ENCODE measurements at regions of chr6 and their contacts with region 1.

Region 1: DNA sequence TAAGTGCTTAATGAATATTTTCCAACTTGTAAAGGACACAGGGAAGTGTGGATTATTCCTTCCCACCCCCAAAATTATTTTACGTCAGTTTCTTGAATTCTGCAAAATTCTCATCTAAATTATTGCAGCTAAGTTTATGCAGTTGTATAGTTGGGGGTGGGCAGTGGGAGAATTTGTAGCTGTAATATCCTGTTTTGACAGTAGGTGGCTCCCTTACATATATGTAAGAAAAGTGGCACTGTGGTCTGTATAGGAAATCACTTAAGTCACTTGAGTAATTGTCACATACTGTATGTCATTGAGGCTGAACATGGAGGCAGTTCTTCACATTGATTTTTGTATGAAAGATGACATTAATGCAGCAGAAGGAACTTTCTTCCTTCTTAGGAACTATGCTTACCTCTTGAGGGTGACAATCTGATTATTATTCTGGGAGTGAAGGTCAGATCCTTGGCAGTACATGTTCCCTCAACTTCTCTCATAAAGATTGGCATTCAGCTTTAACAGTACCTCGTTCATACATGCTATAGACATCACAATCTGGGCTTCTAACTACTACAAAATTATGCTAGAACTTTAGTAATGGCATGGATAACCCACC is 14.7 kb upstream of the CFAP206 start:
- DNase-seq: peak; percentile 64
- ATAC-seq: peak; percentile 81
- H3K4me3 ChIP-seq: no peak overlapping the region
- H3K27ac ChIP-seq: no peak overlapping the region
- H3K4me1 ChIP-seq: no peaks in the 10 kb centered on the region
- H3K27me3 ChIP-seq: no peaks in the 10 kb centered on the region
- CTCF ChIP-seq: peak; percentile 69

Region 2: DNA sequence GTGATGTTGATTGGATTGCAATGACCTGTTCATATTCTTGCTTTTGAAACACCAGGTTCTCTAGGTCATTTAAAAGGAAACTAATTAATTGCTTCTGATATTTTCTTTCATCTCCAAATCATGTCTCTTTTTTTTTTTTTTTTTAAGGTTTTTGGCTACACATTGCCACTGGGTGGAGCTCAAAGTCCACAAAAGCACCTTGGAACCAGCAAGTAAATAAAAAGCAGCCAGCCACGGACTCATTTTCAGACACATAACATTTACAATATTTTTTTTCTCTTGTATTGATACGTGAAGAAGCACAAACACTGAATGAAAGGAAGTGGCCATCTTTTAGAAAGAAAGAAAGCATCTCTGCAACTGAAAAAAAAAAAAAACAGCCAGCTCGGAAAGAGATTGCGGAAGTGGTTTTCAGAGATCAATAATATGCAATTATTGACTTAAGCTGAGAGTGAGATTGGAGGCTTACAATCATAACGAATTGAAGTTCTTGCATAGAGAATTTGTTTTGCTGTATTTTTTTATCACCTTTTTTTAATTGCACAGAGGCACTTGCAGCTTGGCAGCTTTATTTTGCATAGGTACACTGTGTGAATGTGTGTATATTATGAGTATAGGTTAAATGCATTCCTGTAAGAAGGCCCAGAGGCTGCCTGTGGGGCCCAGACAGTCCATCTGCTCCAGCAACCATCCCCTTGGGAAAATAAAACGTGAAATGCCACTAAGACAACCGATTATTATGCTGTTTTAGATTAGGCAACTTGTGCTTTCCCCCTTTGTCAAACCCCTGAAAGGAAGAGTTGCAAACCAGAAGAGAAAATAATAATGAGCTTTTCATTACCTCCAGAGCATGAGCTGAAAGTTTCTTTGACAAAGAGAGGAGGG is 326.4 kb before region 1 on chr6:
- CTCF ChIA-PET with region 1: interaction called, 3 read pairs
- POLR2A ChIA-PET with region 1: no interaction called
- intact Hi-C with region 1: loop called (anchors 2 kb)
- DNase-seq: peak; percentile 56
- ATAC-seq: no peak; the same call in 1 of the 2 replicates
- H3K4me3 ChIP-seq: peak overlapping the region; percentile 52; the same call in 1 of the 2 replicates
- H3K27ac ChIP-seq: no peak overlapping the region
- H3K4me1 ChIP-seq: no peaks in the 10 kb centered on the region
- H3K27me3 ChIP-seq: 0 out of 2 replicates have a peak, but pooled peaks cover 5% of the 10 kb centered on the region
- CTCF ChIP-seq: peak; percentile 78

Region 3: DNA sequence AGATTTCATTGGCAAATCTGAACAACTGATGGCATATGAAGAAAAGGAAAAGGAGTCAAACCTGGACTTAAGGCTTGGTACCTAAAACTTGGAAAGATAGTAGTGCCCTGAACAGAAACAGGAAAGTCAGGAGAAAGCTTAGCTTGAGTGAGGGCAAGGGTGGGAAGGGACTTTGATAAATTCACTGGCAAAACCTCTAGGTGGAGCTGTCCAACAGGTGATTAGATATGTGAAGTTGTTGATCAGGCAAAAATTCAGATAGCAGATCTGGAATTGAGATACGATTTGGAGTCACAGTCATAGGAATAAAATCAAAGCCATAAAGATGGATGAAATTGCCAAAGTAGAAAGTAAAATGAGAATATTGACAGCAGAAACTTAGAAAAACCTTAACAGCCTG is 253.9 kb before region 1 on chr6:
- CTCF ChIA-PET with region 1: no interaction called
- POLR2A ChIA-PET with region 1: no interaction called
- intact Hi-C with region 1: loop called (anchors 2 kb)
- DNase-seq: peak; percentile 66
- ATAC-seq: peak; percentile 72
- H3K4me3 ChIP-seq: no peak overlapping the region
- H3K27ac ChIP-seq: no peak overlapping the region
- H3K4me1 ChIP-seq: no peaks in the 10 kb centered on the region
- H3K27me3 ChIP-seq: peaks cover 12% of the 10 kb centered on the region; the same call in 1 of the 2 replicates
- CTCF ChIP-seq: peak; percentile 75

Region 4: DNA sequence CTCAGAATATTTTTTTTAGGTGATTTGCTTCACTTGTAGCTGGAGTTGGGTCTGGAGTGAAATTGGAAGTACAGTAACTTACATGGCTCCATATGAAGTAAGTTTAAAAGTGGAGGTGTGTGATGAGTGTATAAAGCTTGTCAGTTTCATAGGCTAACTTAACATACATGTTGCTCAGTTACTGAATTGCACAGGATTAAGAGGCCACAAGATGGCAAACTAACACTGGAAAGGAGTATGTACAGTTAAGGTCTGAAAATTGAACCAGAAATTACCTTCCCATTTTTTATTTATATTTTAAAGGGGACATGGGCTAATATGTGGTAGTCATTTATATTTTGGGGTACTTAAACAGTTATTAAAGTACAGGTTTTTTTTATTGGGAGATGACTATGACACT is 116.0 kb before region 1 on chr6:
- CTCF ChIA-PET with region 1: no interaction called
- POLR2A ChIA-PET with region 1: no interaction called
- intact Hi-C with region 1: loop called (anchors 1 kb)
- DNase-seq: peak; percentile 57
- ATAC-seq: peak; percentile 71
- H3K4me3 ChIP-seq: no peak overlapping the region
- H3K27ac ChIP-seq: no peak overlapping the region
- H3K4me1 ChIP-seq: peaks cover 10% of the 10 kb centered on the region; the same call in 1 of the 2 replicates
- H3K27me3 ChIP-seq: no peaks in the 10 kb centered on the region
- CTCF ChIP-seq: peak; percentile 62; the same call in 1 of the 2 replicates

Region 5: DNA sequence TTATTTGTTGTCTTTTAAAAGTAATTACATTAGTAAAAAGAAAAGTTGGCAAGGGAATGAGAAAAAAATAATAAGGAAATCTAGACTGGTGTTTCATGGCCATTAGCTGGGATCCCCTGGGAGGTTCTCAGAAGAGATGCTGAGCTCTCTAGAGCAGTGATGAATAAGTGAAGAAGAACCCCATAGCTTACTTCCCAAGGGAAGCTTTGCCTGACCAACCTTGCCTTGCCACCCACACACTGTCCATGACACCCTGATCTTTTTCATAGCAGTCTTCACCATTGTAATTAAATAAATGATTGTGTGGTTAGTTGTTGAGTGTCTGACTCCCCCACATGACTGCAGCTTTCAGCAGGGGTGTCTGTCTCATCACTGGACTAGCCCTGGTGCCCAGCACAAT is 42.6 kb before region 1 on chr6:
- CTCF ChIA-PET with region 1: no interaction called
- POLR2A ChIA-PET with region 1: no interaction called
- intact Hi-C with region 1: no loop called
- DNase-seq: no peak
- ATAC-seq: no peak
- H3K4me3 ChIP-seq: no peak overlapping the region
- H3K27ac ChIP-seq: no peak overlapping the region
- H3K4me1 ChIP-seq: no peaks in the 10 kb centered on the region
- H3K27me3 ChIP-seq: no peaks in the 10 kb centered on the region
- CTCF ChIP-seq: no peak

Region 6: DNA sequence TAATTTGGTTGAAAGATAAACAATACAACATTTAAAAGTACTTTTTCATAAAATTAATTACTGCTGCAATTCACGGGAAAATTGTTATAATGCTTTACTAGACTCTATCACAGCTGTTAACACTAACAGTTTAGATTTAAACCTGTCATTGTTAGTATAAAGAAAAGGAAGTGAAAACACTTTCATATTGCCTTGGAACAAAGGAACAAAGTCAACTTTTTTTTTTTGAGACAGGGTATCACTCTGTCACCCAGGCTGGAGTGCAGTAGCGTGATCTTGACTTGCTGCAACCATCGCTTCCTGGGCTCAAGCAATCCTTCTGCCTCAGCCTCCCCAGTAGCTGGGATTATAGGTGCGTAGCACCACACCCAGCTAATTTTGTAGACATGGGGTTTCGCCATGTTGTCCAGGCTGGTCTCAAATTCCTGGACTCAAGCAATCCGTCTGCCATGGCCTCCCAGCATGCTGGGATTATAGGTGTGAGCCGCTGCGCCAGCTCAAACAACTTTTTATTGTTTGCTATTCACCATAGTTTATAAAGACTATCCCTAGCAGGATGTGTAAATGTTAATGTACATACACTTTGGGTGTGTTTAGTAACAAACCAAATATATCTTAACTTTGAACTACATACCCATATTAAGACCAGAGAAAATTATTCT is 101.8 kb after region 1 on chr6:
- CTCF ChIA-PET with region 1: no interaction called
- POLR2A ChIA-PET with region 1: no interaction called
- intact Hi-C with region 1: loop called (anchors 5 kb)
- DNase-seq: no peak
- ATAC-seq: peak; percentile 89
- H3K4me3 ChIP-seq: no peak overlapping the region
- H3K27ac ChIP-seq: no peak overlapping the region
- H3K4me1 ChIP-seq: no peaks in the 10 kb centered on the region
- H3K27me3 ChIP-seq: no peaks in the 10 kb centered on the region
- CTCF ChIP-seq: no peak

Region 7: GRCh38 chr6:87504441-87504840 is 111.3 kb after region 1 on chr6:
- CTCF ChIA-PET with region 1: interaction called, 3 read pairs
- POLR2A ChIA-PET with region 1: interaction called, 10 read pairs
- intact Hi-C with region 1: loop called (anchors 5 kb)
- DNase-seq: no peak
- ATAC-seq: no peak
- H3K4me3 ChIP-seq: no peak overlapping the region
- H3K27ac ChIP-seq: no peak overlapping the region
- H3K4me1 ChIP-seq: no peaks in the 10 kb centered on the region
- H3K27me3 ChIP-seq: no peaks in the 10 kb centered on the region
- CTCF ChIP-seq: no peak

Measured in PC-3 (cell line).